Caco-2 (cell line): ENCODE measurements at regions of chr6 and their contacts with region 1.

Region 1: GRCh38 chr6:45951321-45952167 is 64.1 kb downstream of the CLIC5 start:
- DNase-seq: peak; percentile 47 to 48
- H3K4me3 ChIP-seq: no peak overlapping the region
- H3K4me3 Mint-ChIP-seq: peak overlapping the region; percentile 61
- H3K27ac Mint-ChIP-seq: peak overlapping the region; percentile 84
- H3K4me1 ChIP-seq: peaks cover 32% of the 10 kb centered on the region
- H3K4me1 Mint-ChIP-seq: peaks cover 33% of the 10 kb centered on the region
- H3K27me3 ChIP-seq: no peaks in the 10 kb centered on the region
- H3K27me3 Mint-ChIP-seq: no peaks in the 10 kb centered on the region
- CTCF ChIP-seq: no peak

Region 2: GRCh38 chr6:45965792-45966191 is 14.2 kb after region 1 on chr6:
- CTCF ChIA-PET with region 1: no interaction called
- POLR2A ChIA-PET with region 1: no interaction called
- intact Hi-C with region 1: loop called (anchors 1 kb)
- DNase-seq: peak in 1 of 2 experiments; percentile 32
- H3K4me3 ChIP-seq: no peak overlapping the region
- H3K4me3 Mint-ChIP-seq: no peak overlapping the region
- H3K27ac Mint-ChIP-seq: peak overlapping the region; percentile 48
- H3K4me1 ChIP-seq: peaks cover 39% of the 10 kb centered on the region
- H3K4me1 Mint-ChIP-seq: peaks cover 22% of the 10 kb centered on the region
- H3K27me3 ChIP-seq: no peaks in the 10 kb centered on the region
- H3K27me3 Mint-ChIP-seq: no peaks in the 10 kb centered on the region
- CTCF ChIP-seq: no peak